ENCODE measurements at regions of chr11 and their contacts with region 1.

Region 1: DNA sequence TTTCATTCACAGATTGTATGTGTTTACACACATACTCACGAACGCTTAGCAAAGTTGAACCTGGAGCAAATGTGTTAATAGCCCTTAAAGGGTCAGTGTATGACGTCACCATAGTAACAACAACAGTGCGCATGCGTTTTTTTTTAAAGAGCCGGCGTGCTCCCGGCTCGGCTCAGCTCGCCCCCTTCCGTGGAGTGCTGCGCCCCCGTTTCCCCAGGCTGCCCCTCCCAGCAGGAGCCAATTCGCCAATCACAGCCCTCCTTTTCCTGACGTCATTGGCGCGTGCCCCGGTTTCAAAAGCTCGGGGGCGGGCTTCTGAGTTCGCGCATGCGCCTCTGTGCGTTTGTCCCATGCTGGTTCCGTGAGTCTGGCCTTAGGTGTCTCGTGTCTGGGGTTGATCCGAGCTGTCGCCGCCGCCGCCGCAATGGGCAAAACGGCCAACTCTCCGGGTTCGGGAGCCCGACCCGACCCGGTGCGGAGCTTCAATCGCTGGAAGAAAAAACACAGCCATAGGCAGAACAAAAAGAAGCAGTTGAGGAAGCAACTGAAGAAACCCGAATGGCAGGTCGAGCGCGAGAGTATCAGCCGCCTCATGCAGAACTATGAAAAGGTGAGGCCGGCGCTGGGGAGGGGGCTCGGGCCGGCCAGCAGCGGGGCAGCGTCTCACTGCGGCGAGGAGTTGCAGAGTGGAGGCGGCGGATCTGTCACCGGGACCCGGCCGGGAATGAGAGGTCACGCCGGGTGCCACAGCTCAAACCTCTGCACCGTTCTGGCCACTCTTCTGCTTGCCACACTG is at the start of gene DDX10:
- DNase-seq: peak; percentile 99
- H3K4me3 Mint-ChIP-seq: peak within 1 kb of the TSS; percentile 99
- H3K27ac Mint-ChIP-seq: peak within 1 kb of the TSS; percentile 86
- H3K4me1 Mint-ChIP-seq: peaks cover 38% of the 10 kb centered on the region
- H3K27me3 Mint-ChIP-seq: no peaks in the 10 kb centered on the region
- total RNA-seq, gene DDX10: 36.6 to 43.0 TPM

Region 2: DNA sequence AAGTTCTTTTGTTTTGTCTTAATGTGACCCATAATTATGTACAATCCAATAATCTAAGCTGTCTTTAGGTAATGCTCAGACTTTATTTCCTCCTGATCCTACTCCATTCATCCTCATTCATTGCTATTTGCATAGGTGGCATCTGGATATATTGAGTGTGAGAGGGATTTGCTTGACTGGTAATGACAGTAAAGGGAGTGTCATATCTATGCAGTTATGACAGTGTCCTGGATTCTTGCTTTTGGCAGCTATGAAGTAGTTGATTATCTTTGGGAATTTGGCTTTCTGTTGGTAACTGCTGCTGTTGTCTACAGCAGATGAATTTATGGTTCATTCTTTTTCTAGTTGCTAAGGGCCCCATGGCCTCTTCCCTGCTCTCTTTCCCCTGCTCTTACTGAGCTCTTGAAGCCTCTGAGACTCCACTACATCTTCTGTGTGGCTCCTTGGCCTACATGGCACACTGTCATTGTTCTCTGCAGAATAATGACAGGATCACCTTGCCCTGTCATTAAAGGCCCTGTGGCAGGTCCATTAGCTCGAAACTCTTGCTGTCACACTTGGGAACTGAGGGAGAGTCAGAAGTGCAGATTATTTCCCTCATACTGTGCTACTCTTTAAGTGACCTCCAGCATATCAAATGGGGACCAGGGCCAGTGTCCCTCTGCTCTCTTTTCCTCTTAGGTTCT is 563.7 kb before region 1 on chr11:
- CTCF ChIA-PET with region 1: no interaction called
- intact Hi-C with region 1: no loop called
- DNase-seq: no peak
- H3K4me3 Mint-ChIP-seq: no peak overlapping the region
- H3K27ac Mint-ChIP-seq: no peak overlapping the region
- H3K4me1 Mint-ChIP-seq: no peaks in the 10 kb centered on the region
- H3K27me3 Mint-ChIP-seq: no peaks in the 10 kb centered on the region

Region 3: GRCh38 chr11:108302121-108302785 is 362.7 kb before region 1 on chr11:
- CTCF ChIA-PET with region 1: no interaction called
- intact Hi-C with region 1: no loop called
- DNase-seq: no peak
- H3K4me3 Mint-ChIP-seq: no peak overlapping the region
- H3K27ac Mint-ChIP-seq: peak overlapping the region; percentile 50
- H3K4me1 Mint-ChIP-seq: peaks cover 36% of the 10 kb centered on the region
- H3K27me3 Mint-ChIP-seq: no peaks in the 10 kb centered on the region

Region 4: DNA sequence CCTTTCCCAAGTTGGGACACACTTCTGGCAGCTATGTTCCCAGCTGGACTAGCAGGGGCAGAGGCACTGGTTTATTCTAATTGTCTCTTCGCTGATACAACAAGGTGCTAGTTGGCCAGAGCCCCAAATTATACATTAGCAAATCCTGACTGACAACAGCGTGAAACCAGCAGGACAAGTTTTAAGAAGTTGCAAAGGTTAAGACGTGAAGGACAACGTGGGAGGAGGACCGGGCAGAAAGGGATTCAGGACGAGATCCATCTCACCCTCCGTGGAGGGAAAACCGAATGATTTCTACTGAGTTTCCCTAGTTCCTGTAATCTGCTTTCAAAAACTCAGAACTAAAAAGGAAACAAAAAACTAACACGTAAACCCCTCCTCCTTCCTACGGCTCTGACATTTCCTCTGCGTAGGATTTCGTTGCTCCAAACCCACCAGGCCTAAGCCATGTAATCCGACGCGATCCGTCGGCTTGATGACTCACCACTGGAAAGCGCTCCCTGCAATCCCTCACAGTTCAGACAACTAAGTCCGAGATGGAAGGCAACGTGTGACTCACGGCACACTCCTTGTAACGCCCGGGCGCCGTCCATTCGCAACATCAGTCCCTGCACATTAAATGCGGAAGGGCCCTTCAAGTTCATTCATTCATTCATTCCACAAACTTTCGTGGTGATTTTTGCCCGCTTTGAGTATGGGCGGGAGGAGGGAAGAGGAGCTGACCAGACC is 167.4 kb before region 1 on chr11:
- CTCF ChIA-PET with region 1: interaction called, 5 read pairs
- intact Hi-C with region 1: loop called (anchors 1 kb)
- DNase-seq: peak; percentile 84
- H3K4me3 Mint-ChIP-seq: peak overlapping the region; percentile 85
- H3K27ac Mint-ChIP-seq: peak overlapping the region; percentile 92
- H3K4me1 Mint-ChIP-seq: peaks cover 16% of the 10 kb centered on the region
- H3K27me3 Mint-ChIP-seq: no peaks in the 10 kb centered on the region

Measured in activated naive CD4-positive, alpha-beta T cell treated with anti-CD3 and anti-CD28 coated beads for 36 hours (primary cell).